ENCODE measurements at regions of chr13 and their contacts with region 1.

Region 1: DNA sequence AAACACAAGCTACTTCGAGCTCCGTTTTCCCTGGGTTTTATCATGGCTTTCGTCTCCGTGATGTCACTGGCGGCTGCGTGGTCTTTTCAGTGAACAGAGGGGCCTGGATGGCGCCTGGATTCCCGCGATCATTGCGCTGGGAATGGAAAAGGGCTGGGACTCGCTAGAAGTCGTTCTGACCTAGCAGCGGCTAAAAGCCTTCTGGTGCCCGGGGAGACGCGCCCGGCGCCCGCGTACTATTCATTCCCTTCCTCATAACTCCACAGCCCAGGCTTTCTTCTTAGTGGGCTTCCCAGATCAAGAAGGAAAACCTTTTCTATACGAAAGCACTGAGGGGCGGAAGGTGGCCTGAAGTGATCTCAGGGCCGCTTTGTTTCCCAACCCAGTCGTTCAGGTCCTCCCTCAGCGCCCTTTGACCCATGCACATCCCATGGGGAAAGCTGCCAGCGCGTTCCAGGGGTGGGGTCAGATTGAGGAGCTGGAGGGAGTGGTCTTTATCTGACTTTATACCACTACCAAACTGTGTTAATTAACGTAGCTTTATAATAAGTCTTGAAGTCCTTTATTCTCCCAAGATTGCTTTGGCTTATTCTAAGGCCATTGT is 96.6 kb downstream of the ELF1 start:
- DNase-seq: no peak

Region 2: DNA sequence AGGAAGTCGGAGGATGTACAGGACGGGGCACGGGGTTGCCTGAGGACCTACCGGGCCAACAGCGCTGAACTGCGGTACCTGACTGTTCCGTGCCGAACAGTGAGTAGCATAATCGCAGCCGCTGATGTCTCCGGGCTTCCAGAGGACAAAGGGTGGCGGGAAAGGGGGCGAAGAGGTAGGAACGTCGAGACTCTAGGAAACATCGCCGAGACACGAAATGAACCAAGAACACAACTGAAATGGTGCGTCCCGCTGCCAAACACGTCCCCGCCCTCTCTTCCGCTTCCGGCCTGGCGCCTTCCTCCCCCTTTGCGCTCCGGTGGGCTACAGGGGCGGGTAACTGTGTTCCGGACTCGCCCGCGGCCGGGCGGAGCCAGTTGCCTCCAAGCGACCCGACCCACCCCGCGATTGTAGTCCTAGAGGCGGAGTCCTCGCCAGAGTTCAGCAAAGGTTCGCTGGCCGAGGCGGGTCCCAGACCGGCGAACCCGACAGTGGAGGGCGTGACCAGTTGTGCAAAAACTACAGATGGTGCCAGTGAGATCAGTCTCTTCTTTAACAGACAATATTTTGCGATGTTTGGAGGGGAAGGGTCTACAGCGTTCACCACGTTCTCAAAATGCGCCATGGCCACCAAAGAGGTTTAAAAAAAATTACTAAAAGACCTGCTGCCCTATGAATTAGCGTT is 151.5 kb before region 1 on chr13 and contains the start of gene MRPS31:
- intact Hi-C with region 1: loop called (anchors 5 kb)
- DNase-seq: peak; percentile 91 to 99 (median 94)

Region 3: GRCh38 chr13:41751277-41751676 is 828.7 kb after region 1 on chr13:
- intact Hi-C with region 1: no loop called
- DNase-seq: no peak

Measured in posterior cingulate gyrus (tissue), 11 donors.